Heart left ventricle (tissue), 16 donors: ENCODE measurements at regions of chr2 and their contacts with region 1.

Region 1: DNA sequence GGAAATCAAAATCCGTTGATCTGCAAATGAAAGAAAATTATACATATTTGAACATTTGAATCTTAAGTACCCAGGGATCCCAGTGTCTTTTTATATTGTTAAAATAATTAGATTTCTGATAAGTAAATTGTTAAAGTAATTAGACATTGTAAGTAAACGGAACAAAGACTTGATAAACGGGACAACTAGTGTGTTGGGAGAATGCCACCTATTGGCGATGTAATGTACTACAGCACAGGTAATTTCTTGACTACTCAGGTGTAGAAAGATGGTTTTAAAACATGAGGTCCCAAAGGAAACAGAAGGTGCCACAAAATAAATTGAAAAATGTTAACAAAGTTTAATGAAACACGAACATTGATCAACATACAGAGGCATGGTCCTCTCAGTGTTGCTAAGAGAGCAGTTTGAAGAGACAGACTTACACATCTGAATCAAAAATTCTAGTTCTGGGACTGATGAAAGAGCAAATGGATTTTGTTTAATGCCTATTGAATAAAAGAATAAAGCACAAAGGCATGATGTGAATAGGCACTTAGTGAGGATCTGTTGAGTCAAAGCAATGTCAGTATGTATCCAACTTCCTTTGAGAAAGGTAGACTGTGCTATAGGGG is 103.4 kb upstream of the RASGRP3 start:
- DNase-seq: no peak
- ATAC-seq: no peak
- H3K4me3 ChIP-seq: no peak overlapping the region
- H3K27ac ChIP-seq: no peak overlapping the region
- H3K4me1 ChIP-seq: peaks cover 0 to 5% (median 0%) of the 10 kb centered on the region in 12 donors
- H3K27me3 ChIP-seq: no peaks in the 10 kb centered on the region
- CTCF ChIP-seq: peak; percentile 67 to 86 (median 76)
- POLR2A ChIP-seq: no peak

Region 2: DNA sequence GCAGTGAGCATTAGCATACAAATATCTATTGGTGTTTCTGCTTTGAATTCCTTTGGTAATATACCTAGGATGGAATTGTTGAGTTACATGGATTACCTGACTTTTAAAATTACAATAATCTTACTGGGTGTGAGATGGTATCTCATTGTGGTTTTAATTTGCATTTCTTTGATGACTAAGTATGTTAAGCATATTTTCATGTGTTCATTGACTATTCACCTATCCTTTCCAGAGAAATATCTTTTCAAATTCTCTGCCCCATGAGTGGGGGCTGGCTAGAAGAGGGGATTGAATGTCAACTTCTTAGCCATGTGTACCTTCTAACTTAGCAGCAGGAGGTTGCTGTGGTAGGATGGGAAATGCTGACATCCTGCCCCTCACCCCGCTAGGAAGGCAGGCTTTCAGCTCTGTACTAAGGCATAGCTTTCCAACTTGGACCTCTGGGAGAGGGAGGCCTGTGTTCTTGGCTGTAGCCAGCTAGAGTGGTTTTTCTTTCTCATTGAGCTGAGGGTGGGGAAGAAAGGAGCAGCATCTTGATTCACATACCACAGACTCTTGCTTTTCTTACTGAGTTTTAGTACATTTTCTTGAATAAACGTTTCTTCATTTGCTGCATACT is 808.5 kb before region 1 on chr2:
- intact Hi-C with region 1: loop called in 1 of 10 experiments (anchors 10 kb)
- DNase-seq: no peak
- ATAC-seq: no peak
- H3K4me3 ChIP-seq: no peak overlapping the region
- H3K27ac ChIP-seq: no peak overlapping the region
- H3K4me1 ChIP-seq: peaks cover 0 to 2% (median 0%) of the 10 kb centered on the region in 12 donors
- H3K27me3 ChIP-seq: no peaks in the 10 kb centered on the region
- CTCF ChIP-seq: no peak
- POLR2A ChIP-seq: no peak

Region 3: GRCh38 chr2:32792416-32792815 is 580.6 kb before region 1 on chr2:
- intact Hi-C with region 1: loop called in 1 of 10 experiments (anchors 10 kb)
- DNase-seq: peak in 4 of 5 donors; percentile 48 to 65 (median 60)
- ATAC-seq: peak; percentile 79 to 94 (median 92)
- H3K4me3 ChIP-seq: no peak overlapping the region
- H3K27ac ChIP-seq: peak overlapping the region in 6 of 12 donors; percentile 0 to 57 (median 14)
- H3K4me1 ChIP-seq: peaks cover 0 to 33% (median 24%) of the 10 kb centered on the region in 12 donors
- H3K27me3 ChIP-seq: no peaks in the 10 kb centered on the region
- CTCF ChIP-seq: no peak
- POLR2A ChIP-seq: no peak

Region 4: GRCh38 chr2:33047939-33048338 is 325.1 kb before region 1 on chr2:
- intact Hi-C with region 1: loop called in 1 of 10 experiments (anchors 10 kb)
- DNase-seq: no peak
- ATAC-seq: no peak
- H3K4me3 ChIP-seq: no peak overlapping the region
- H3K27ac ChIP-seq: no peak overlapping the region
- H3K4me1 ChIP-seq: peaks cover 0 to 10% (median 3%) of the 10 kb centered on the region in 12 donors
- H3K27me3 ChIP-seq: no peaks in the 10 kb centered on the region
- CTCF ChIP-seq: no peak
- POLR2A ChIP-seq: no peak

Region 5: GRCh38 chr2:33258387-33258786 is 114.7 kb before region 1 on chr2:
- intact Hi-C with region 1: no loop called
- DNase-seq: no peak
- ATAC-seq: peak in 2 of 4 donors; percentile 36 to 52
- H3K4me3 ChIP-seq: no peak overlapping the region
- H3K27ac ChIP-seq: peak overlapping the region in 3 of 12 donors; percentile 1 to 32 (median 13)
- H3K4me1 ChIP-seq: peaks cover 0 to 8% (median 0%) of the 10 kb centered on the region in 12 donors
- H3K27me3 ChIP-seq: no peaks in the 10 kb centered on the region
- CTCF ChIP-seq: no peak
- POLR2A ChIP-seq: no peak

Region 6: GRCh38 chr2:33275689-33276444 is 97.2 kb before region 1 on chr2:
- intact Hi-C with region 1: loop called in 1 of 10 experiments (anchors 10 kb)
- DNase-seq: peak in 4 of 5 donors; percentile 29 to 66 (median 44)
- ATAC-seq: peak; percentile 40 to 80 (median 71)
- H3K4me3 ChIP-seq: no peak overlapping the region
- H3K27ac ChIP-seq: peak overlapping the region in 7 of 12 donors; percentile 9 to 89 (median 55)
- H3K4me1 ChIP-seq: peaks cover 0 to 21% (median 0%) of the 10 kb centered on the region in 12 donors
- H3K27me3 ChIP-seq: no peaks in the 10 kb centered on the region
- CTCF ChIP-seq: no peak
- POLR2A ChIP-seq: no peak

Region 7: DNA sequence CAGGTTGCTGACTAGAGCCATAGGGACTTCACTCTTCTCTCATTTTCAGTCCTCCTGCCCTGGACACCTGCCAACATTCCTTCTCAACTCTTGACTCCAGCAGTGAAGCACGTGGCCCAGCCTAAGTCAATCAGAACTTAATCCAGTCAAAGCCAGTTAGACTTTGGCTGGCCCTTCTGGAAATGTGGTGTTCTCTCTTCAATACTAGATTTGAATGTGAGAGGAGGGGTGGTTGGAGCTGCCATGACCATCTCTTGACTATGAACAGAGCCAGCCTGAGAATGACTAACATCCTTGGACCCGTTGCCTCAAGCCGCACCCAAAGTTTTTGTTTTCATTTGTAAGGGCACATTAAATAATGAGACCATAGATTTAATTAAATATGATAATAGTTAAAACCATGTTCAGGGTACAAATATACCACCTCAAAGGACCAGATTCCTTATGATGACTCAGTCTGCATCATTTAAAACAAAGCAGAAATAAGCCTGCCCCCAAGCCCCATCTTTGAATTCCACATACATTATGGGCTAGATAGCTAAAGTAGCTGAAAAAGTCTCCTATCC is 53.7 kb after region 1 on chr2:
- intact Hi-C with region 1: no loop called
- DNase-seq: peak in 4 of 5 donors; percentile 66 to 77 (median 73)
- ATAC-seq: peak; percentile 63 to 86 (median 82)
- H3K4me3 ChIP-seq: no peak overlapping the region
- H3K27ac ChIP-seq: no peak overlapping the region
- H3K4me1 ChIP-seq: peaks cover 0 to 7% (median 0%) of the 10 kb centered on the region in 12 donors
- H3K27me3 ChIP-seq: no peaks in the 10 kb centered on the region
- CTCF ChIP-seq: no peak
- POLR2A ChIP-seq: no peak

Region 8: GRCh38 chr2:33441235-33441810 is 68.3 kb after region 1 on chr2:
- intact Hi-C with region 1: loop called in 1 of 10 experiments (anchors 2 kb)
- DNase-seq: peak in 4 of 5 donors; percentile 56 to 64 (median 61)
- ATAC-seq: peak; percentile 66 to 85 (median 82)
- H3K4me3 ChIP-seq: no peak overlapping the region
- H3K27ac ChIP-seq: peak overlapping the region in 7 of 12 donors; percentile 10 to 74 (median 52)
- H3K4me1 ChIP-seq: peaks cover 0 to 45% (median 18%) of the 10 kb centered on the region in 12 donors
- H3K27me3 ChIP-seq: no peaks in the 10 kb centered on the region
- CTCF ChIP-seq: peak; percentile 51 to 83 (median 71)
- POLR2A ChIP-seq: no peak